SK-N-SH (cell line): ENCODE measurements at regions of chr11 and their contacts with region 1.

Region 1: DNA sequence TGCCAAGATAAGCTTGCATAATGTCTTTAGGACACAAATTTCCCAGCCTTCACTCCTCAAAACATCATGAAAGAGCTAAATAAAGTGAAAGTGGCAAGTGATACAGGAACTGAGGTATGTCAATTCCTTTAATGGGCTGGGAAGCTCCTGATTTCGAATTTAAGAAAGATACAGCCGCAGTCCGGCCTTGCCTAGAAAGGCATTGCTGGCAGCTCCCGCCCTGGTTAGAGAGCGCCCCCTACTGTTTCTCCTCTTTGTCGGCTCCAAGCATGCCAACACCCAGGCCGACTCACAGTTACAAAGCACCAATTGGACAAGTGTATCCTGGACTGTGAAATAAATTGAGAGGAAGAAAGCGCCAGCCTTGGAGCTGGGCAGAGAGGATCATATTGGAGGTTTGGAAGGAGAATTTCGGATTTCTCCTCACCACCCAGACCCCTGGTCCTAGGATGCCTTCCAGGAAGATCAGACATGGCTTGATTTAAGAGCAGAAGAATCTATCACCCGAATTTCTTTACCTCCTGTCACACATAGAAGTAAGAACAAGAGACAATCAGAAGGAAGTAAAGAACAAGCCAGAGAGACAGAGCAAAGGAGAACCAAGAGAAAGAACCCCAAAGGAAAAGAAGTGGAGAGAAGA is 84.0 kb downstream of the FAM76B start:
- DNase-seq: peak; percentile 65
- H3K4me3 ChIP-seq: no peak overlapping the region; a peak in 1 of 4 replicates
- H3K27ac ChIP-seq: no peak overlapping the region
- H3K4me1 ChIP-seq: peaks cover 0 to 7% of the 10 kb centered on the region in 2 experiments; a peak in 3 of 4 replicates
- H3K27me3 ChIP-seq: peaks cover 5% of the 10 kb centered on the region; the same call in 1 of the 2 replicates
- CTCF ChIP-seq: peak; percentile 94
- EP300 ChIP-seq: no peak
- RAD21 ChIP-seq: peak; percentile 99

Region 2: DNA sequence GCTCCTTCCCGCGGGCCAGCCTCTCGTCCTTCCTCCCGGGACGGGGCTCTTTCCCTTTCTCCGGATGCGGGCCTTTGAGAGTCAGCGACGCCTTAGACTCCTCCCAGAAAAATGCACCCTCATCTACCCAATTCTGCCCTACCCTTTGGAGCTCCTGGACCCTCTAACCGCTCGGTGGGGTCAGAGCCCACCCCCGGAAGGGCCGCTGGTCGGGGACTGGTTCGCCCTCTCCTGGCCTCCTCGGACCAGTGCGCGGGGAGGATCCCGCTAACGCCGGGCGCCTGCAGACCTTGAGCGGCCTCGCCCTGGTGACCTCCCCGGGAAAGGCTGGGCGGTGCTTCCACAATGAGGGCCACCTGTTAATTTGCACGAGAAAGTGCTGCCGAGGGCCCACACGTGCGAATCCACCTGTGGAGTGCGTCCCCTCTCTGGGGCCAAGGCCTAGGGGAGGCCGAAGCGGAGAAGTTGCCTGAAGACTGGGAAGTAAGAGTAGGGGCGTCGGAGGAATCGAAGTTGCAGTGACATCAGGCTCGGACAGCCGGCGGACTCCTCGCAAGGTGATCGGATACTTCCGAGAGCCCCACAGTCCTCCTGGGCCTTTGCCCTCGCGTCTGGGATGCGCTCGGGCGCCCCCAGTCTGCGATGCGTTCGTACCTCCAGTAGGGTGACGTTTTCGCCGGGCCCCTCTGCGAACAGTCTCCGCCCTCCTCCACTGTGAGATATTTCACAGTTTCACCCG is 554.5 kb before region 1 on chr11:
- CTCF ChIA-PET with region 1: interaction called, 159 read pairs
- POLR2A ChIA-PET with region 1: no interaction called
- DNase-seq: peak; percentile 78
- H3K4me3 ChIP-seq: no peak overlapping the region; a peak in 1 of 4 replicates
- H3K27ac ChIP-seq: no peak overlapping the region
- H3K4me1 ChIP-seq: peaks cover 24 to 27% of the 10 kb centered on the region in 2 experiments
- H3K27me3 ChIP-seq: no peaks in the 10 kb centered on the region
- CTCF ChIP-seq: peak; percentile 58
- EP300 ChIP-seq: no peak
- RAD21 ChIP-seq: no peak

Region 3: GRCh38 chr11:95524314-95525036 is 181.1 kb before region 1 on chr11:
- CTCF ChIA-PET with region 1: interaction called, 13 read pairs
- POLR2A ChIA-PET with region 1: no interaction called
- DNase-seq: peak; percentile 55
- H3K4me3 ChIP-seq: no peak overlapping the region
- H3K27ac ChIP-seq: peak overlapping the region in 1 of 2 experiments; percentile 93; a peak in 2 of 4 replicates
- H3K4me1 ChIP-seq: peaks cover 0 to 6% of the 10 kb centered on the region in 2 experiments; a peak in 2 of 4 replicates
- H3K27me3 ChIP-seq: no peaks in the 10 kb centered on the region; the same call in 1 of the 2 replicates
- CTCF ChIP-seq: no peak
- EP300 ChIP-seq: peak in 1 of 2 experiments; percentile 90; a peak in 2 of 4 replicates
- RAD21 ChIP-seq: peak; percentile 35; the same call in 1 of the 2 replicates

Region 4: DNA sequence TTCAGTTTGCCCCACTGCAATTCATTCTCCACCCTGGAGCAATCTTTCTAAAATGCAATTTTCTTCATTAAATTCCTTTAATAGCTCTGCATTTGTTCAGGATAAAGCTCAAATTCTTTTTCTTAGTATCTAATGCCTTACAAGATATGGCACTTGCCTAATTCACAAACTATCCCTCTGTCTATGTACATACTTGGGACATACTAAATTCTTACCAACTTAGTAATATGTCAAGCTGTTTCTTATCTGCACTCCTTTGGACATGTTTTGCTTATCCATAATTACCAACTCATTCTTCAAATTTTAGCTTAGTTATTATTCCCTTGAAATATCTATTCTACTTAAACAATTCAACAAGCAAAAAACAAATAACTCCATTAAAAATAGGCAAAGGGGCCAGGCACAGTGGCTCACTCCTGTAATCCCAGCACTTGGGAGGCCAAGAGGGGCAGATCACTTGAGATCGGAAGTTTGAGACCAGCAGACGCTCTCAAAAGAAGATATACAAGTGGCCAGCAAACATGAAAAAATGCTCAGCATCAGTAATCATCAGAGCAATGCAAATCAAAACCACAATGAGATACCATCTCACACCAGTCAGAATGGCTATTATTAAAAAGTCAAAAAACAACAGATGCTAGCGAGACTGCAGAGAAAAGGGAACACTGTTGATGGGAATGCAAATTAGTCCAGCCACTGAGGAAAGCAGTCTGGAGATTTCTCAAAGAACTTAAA is 12.9 kb before region 1 on chr11:
- CTCF ChIA-PET with region 1: interaction called, 42 read pairs
- POLR2A ChIA-PET with region 1: no interaction called
- DNase-seq: no peak
- H3K4me3 ChIP-seq: no peak overlapping the region
- H3K27ac ChIP-seq: no peak overlapping the region
- H3K4me1 ChIP-seq: no peaks in the 10 kb centered on the region
- H3K27me3 ChIP-seq: no peaks in the 10 kb centered on the region
- CTCF ChIP-seq: no peak
- EP300 ChIP-seq: no peak
- RAD21 ChIP-seq: no peak

Region 5: GRCh38 chr11:95739108-95739938 is 33.7 kb after region 1 on chr11:
- CTCF ChIA-PET with region 1: interaction called, 11 read pairs
- POLR2A ChIA-PET with region 1: no interaction called
- DNase-seq: no peak
- H3K4me3 ChIP-seq: no peak overlapping the region
- H3K27ac ChIP-seq: no peak overlapping the region
- H3K4me1 ChIP-seq: peaks cover 0 to 3% of the 10 kb centered on the region in 2 experiments; a peak in 1 of 4 replicates
- H3K27me3 ChIP-seq: 0 out of 2 replicates have a peak, but pooled peaks cover 9% of the 10 kb centered on the region
- CTCF ChIP-seq: peak; percentile 20; the same call in 1 of the 2 replicates
- EP300 ChIP-seq: no peak; a peak in 1 of 4 replicates
- RAD21 ChIP-seq: no peak

Region 6: DNA sequence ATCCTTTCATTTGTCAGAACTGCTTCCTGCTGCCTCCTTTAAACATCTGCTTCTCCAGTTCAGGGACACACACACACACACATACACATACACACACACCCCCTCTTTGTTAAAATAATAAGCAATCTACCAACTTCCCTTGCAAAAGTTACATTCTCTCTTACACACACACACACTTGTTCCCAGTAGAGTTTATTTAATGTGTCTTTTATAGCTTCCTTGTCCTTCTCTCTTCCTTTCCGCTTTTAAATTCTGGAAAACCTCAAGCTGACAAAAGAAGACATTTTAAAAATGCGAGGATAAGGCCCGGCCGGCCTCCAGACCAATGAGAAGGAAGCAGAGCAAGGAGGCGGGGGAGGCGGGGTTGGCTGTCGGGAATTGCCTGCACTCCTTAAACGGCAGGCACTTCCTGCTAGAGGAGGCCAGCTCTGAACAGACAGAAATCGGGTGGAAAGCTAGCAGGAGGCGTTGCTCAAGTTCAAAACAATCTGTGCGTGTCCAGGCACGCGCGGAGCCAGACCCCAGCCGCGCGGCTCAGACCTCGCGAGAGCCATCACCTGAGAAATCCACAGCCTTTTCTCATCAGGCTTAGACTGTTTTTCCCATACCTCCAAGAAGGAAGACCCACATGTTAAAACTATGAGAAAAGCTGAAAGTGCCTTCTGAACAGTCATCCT is 537.5 kb after region 1 on chr11:
- CTCF ChIA-PET with region 1: no interaction called
- POLR2A ChIA-PET with region 1: no interaction called
- DNase-seq: peak; percentile 89
- H3K4me3 ChIP-seq: peak overlapping the region; percentile 32 to 51
- H3K27ac ChIP-seq: peak overlapping the region; percentile 83 to 92
- H3K4me1 ChIP-seq: peaks cover 19 to 53% of the 10 kb centered on the region in 2 experiments; a peak in 3 of 4 replicates
- H3K27me3 ChIP-seq: no peaks in the 10 kb centered on the region
- CTCF ChIP-seq: no peak
- EP300 ChIP-seq: peak in 1 of 2 experiments; percentile 53; a peak in 1 of 4 replicates
- RAD21 ChIP-seq: peak; percentile 12; the same call in 1 of the 2 replicates